Activated B cell treated with CpG ODN at 0.5 μM for 24 hours (primary cell): ENCODE measurements at regions of chr12 and their contacts with region 1.

Region 1: DNA sequence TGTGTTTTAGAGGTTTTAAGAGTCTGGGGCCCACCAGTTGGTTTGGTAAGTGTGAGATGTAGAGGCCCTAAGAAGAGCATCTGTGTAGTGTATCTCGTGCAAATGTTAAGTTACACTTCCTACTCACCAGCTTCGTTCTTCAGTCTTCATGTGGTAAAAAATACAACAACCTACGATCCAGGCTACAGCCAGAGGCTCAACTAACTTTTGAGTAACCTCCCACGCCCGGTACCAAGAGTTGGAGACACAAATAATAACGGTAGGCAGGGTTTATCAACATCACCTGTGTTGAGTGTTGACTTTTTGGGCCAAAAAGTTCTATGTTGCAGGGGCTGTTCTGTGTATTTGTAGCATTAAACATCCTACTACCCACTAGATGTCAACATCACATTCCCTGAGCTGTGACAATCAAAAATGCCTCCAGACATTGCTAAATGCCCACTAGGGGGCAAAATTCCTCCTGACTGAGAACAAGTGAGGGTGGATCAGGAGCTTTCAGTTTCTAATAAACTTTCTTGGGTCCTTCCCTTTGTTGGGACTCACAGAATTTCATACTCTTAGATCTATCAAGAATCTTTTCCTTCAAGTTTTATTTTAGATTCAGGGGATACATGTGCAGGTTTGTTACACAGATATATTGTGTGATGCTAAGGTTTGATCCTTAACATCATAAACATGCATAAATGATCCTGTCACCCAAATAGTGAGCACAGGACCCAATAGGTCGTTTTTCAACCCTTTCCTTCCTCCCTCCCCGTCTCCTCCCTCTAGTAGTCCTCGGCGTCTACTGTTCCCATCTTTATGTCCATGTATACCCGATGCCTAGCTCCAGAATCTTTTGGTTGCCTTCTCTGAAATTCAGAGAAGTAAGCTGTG is 94.7 kb downstream of the SLC2A13 start:
- DNase-seq: no peak
- ATAC-seq: peak; percentile 84
- H3K4me3 Mint-ChIP-seq: peak overlapping the region; percentile 68
- H3K27ac Mint-ChIP-seq: peak overlapping the region; percentile 20
- H3K4me1 Mint-ChIP-seq: peaks cover 17% of the 10 kb centered on the region
- H3K27me3 Mint-ChIP-seq: no peaks in the 10 kb centered on the region
- CTCF ChIP-seq: peak; percentile 28

Region 2: GRCh38 chr12:40022850-40023249 is 11.7 kb after region 1 on chr12:
- CTCF ChIA-PET with region 1: interaction called, 12 read pairs
- POLR2A ChIA-PET with region 1: no interaction called
- intact Hi-C with region 1: no loop called
- DNase-seq: no peak
- ATAC-seq: no peak
- H3K4me3 Mint-ChIP-seq: no peak overlapping the region
- H3K27ac Mint-ChIP-seq: no peak overlapping the region
- H3K4me1 Mint-ChIP-seq: peaks cover 20% of the 10 kb centered on the region
- H3K27me3 Mint-ChIP-seq: no peaks in the 10 kb centered on the region
- CTCF ChIP-seq: no peak

Region 3: DNA sequence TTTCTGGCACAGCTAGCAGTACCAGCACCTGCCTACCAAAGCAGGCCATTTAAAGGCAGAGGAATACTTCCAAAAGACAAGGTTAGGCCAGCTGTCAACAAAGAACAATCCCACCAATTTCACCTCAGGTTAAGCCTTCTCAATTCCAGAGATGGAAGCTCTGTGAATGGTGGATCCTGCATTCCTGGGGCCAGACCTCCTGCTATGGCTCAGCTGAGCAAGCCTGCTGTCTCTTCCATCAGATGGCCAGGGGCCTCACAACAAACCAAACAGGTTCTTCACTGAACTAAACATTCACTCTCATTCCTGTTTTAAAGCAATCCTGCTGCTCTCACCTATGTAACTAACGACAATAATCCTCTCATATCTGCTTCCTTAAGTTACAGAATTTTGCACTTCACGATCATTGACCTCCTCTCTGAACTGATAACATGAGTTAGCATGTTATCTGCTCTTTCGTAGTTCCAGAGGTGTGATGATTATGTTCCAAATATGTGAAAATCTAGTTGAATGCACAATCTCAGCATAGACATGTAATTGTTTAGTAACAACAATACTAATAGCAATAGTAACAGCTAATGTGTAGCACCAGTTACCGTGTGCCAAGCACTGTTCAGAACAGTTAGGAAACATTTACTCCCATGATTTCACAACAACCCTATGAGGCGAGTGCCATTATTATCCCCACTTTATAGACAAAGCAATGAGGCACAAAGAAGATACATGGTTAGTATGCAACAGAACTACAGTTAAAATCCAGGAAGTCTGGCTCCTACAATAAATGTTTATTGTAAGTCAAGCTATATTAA is 21.5 kb after region 1 on chr12:
- CTCF ChIA-PET with region 1: interaction called, 16 read pairs
- POLR2A ChIA-PET with region 1: interaction called, 3 read pairs
- intact Hi-C with region 1: no loop called
- DNase-seq: no peak
- ATAC-seq: no peak
- H3K4me3 Mint-ChIP-seq: no peak overlapping the region
- H3K27ac Mint-ChIP-seq: no peak overlapping the region
- H3K4me1 Mint-ChIP-seq: peaks cover 2% of the 10 kb centered on the region
- H3K27me3 Mint-ChIP-seq: no peaks in the 10 kb centered on the region
- CTCF ChIP-seq: no peak

Region 4: DNA sequence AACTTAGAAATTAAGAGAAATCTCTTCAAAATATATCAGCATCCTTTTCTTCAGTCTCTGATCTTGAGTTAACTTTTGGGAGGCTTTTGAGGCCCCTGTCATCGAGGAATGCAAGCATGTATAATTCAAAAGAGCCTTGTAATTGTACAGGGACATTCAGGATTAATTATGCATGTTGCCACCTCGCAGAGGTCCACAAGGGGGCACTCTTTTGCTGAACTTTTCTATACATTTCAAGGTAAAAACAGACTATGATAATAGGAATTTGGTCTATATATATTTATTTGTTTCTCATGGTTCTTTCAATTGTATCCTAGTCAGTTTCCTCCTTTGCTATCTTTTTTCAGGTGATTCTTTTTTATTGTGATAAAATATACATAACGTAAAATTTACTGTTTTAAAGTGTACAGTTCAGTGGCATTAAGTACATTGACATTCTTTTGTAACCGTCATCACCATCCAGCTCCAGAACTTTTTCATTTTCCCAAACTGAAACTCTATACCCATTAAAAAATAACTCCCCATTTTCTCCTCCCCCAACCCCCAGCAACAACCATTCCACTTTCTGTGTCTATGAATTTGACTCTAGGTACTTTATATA is 141.7 kb after region 1 on chr12:
- CTCF ChIA-PET with region 1: interaction called, 4 read pairs
- POLR2A ChIA-PET with region 1: no interaction called
- intact Hi-C with region 1: loop called (anchors 1 kb)
- DNase-seq: peak; percentile 33
- ATAC-seq: peak; percentile 56
- H3K4me3 Mint-ChIP-seq: no peak overlapping the region
- H3K27ac Mint-ChIP-seq: peak overlapping the region; percentile 3
- H3K4me1 Mint-ChIP-seq: peaks cover 52% of the 10 kb centered on the region
- H3K27me3 Mint-ChIP-seq: no peaks in the 10 kb centered on the region
- CTCF ChIP-seq: peak; percentile 58

Region 5: GRCh38 chr12:40325349-40325960 is 314.3 kb after region 1 on chr12:
- CTCF ChIA-PET with region 1: interaction called, 14 read pairs
- POLR2A ChIA-PET with region 1: no interaction called
- intact Hi-C with region 1: no loop called
- DNase-seq: no peak
- ATAC-seq: peak; percentile 96
- H3K4me3 Mint-ChIP-seq: no peak overlapping the region
- H3K27ac Mint-ChIP-seq: no peak overlapping the region
- H3K4me1 Mint-ChIP-seq: peaks cover 13% of the 10 kb centered on the region
- H3K27me3 Mint-ChIP-seq: no peaks in the 10 kb centered on the region
- CTCF ChIP-seq: no peak

Region 6: DNA sequence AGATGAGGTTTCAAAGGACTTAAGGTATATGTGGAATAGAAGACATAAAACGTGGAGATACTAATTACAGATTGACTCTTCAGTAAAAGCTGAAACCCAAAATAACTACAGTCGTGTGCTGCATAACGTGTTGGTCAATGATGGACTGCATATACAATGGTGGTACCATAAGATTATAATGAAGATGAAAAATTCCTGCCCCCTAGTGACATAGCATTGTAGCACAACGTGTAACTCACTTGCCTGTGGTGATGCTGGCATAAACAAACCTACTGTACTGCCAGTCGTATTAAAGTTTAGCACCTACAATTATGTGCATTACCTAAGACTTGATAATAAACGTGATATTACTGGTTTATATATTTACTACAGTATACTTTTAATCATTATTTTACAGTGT is 363.9 kb after region 1 on chr12:
- CTCF ChIA-PET with region 1: no interaction called
- POLR2A ChIA-PET with region 1: no interaction called
- intact Hi-C with region 1: loop called (anchors 1 kb)
- DNase-seq: no peak
- ATAC-seq: no peak
- H3K4me3 Mint-ChIP-seq: no peak overlapping the region
- H3K27ac Mint-ChIP-seq: no peak overlapping the region
- H3K4me1 Mint-ChIP-seq: peaks cover 8% of the 10 kb centered on the region
- H3K27me3 Mint-ChIP-seq: no peaks in the 10 kb centered on the region
- CTCF ChIP-seq: no peak